ENCODE measurements at regions of chr19 and their contacts with region 1.

Region 1: GRCh38 chr19:58543826-58544590 is at the start of gene TRIM28:
- DNase-seq: peak; percentile 99

Region 2: DNA sequence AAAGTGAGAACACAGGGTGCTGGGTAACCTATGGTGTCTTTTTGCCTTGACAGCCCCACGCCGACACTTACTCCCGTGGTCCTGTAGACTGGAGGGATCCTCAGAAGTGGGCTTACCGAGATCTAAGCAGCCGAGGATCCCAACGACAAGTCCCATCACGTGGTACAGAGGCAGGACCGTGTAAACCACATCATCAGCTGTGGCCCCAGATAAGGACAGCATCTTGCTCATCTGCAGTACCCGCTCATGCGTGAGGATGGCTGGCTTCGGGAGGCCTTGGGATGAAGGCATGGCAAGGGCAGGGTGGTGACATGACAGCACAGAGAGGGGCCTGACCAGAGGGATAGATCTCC is 34.3 kb before region 1 on chr19:
- CTCF ChIA-PET with region 1: no interaction called
- POLR2A ChIA-PET with region 1: no interaction called
- DNase-seq: no peak

Region 3: DNA sequence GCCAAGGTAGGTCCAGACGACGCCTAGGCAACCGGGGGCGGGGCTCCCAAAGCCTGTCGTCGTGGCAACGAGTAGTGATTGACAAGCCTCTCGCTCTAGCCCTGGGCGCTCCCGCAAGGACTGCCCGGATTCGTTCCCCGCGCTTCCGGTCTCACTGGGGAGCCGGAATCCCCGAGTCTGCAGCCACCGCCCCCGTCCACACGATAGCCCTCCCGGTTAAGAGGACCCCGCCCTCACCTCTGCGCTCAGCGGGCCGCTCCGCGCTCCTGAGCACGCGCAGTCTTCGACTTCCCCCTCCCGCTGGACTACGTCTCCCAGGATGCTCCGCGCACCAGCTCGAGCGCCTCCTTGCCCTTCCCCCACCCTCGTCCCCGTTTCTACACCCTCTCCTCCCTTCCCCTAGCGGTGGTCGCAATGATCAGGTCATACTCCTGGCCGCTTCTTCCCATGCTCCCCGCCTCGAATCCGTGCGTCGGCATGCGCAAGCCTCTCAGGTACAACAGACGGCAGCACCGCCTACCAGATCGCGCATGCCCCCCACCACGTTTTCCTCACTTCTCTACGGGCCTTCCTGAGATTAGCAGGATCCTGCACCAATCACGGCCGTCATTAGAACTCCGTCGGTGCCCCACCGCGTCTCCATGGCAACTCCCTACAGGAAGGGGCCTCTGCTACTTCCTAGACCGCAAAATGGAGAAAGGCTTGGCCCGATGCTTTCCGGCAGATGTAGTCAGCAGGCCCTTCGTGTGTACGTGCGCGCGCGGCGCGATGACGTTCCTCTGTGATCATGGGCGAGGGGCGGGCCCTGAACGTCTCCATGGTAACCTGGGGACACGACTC is 29.0 kb after region 1 on chr19 and contains the start of gene MZF1:
- CTCF ChIA-PET with region 1: no interaction called
- POLR2A ChIA-PET with region 1: interaction called, 16 read pairs
- DNase-seq: peak; percentile 95

Region 4: DNA sequence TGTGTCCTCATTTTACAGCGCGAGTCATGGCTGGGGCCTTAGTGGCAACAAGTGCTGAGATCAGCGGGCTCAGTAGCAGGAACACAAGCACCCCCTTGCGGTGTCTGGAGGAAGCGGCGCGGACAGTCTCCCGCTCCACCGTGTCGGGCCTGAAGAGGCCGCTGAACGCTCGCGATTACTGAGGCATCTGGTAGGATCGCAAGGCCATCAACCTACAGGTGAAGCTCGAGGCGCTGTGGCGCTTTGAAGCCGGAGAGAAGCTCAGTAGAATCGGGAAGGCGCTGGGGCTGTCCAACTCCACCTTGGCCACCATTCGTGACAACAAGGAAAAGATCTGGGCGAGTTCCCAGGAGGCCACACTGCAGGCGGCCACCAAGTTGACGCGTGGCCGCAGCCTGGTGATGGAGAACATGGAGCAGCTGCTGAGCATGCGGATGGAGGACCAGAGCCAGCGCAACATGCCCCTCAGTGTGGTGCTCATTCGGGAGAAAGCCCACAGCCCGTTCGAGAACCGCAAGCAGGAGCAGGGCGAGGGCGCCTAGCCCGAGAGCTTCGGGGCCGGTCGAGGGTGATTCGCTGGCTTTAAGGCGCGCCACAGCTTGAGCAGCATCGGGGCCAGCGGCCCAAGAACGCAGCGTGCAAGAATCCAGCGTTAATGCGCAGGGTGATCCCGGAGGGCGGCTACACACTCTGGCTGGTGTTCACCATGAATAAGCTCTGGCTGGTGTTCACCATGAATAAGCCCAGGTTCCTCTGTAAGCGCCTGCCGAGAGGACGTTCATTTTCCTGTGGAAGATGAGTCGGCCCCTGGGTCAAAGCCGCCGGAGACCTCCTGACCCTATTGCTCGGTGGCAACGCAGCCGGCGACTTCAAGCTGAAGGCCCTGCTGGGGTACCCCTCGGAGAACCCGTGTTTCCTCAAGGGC is 37.5 kb after region 1 on chr19:
- CTCF ChIA-PET with region 1: no interaction called
- POLR2A ChIA-PET with region 1: interaction called, 16 read pairs
- DNase-seq: peak; percentile 85

Measured in HEK293T (cell line).